CD14-positive monocyte (primary cell): ENCODE measurements at regions of chr12 and their contacts with region 1.

Region 1: DNA sequence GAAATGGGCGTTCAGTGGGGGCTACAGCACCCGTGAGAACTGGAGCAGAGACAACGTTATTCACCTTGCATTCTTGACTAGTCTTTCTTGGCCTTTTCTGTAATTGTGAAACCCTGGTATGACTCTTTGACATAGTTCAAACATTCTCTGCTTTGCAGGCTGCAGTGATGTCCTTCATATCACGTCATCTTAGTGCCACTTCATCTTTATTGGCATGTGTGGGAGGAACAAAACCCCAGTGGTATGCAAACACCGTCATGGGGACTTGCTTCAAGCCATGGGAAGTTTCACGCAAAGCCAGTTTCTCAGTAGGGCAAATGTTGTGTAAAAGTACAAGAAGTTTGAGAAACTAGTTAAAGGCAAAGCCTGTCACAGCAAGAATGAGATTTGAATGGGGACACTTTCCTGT is 20.2 kb upstream of the DUSP16 start:
- DNase-seq: no peak
- H3K4me3 ChIP-seq: no peak overlapping the region
- H3K4me3 Mint-ChIP-seq: no peak overlapping the region
- H3K27ac ChIP-seq: no peak overlapping the region
- H3K27ac Mint-ChIP-seq: no peak overlapping the region
- H3K4me1 ChIP-seq: no peaks in the 10 kb centered on the region
- H3K4me1 Mint-ChIP-seq: peaks cover 12% of the 10 kb centered on the region
- H3K27me3 ChIP-seq: no peaks in the 10 kb centered on the region
- H3K27me3 Mint-ChIP-seq: peaks cover 2 to 5% (median 2%) of the 10 kb centered on the region in 3 donors
- CTCF ChIP-seq: no peak

Region 2: GRCh38 chr12:11719678-11720099 is 863.2 kb before region 1 on chr12:
- intact Hi-C with region 1: no loop called
- DNase-seq: peak; percentile 92 to 97 (median 96)
- H3K4me3 ChIP-seq: peak overlapping the region in 1 of 3 experiments; percentile 16
- H3K4me3 Mint-ChIP-seq: peak overlapping the region; percentile 42 to 69
- H3K27ac ChIP-seq: peak overlapping the region; percentile 52 to 89
- H3K27ac Mint-ChIP-seq: peak overlapping the region; percentile 86 to 95 (median 92)
- H3K4me1 ChIP-seq: peaks cover 41 to 44% of the 10 kb centered on the region in 2 donors
- H3K4me1 Mint-ChIP-seq: peaks cover 75% of the 10 kb centered on the region
- H3K27me3 ChIP-seq: no peaks in the 10 kb centered on the region
- H3K27me3 Mint-ChIP-seq: peaks cover 0 to under 1% (median 0%) of the 10 kb centered on the region in 3 donors
- CTCF ChIP-seq: no peak

Region 3: GRCh38 chr12:12636641-12637040 is 53.7 kb after region 1 on chr12:
- intact Hi-C with region 1: loop called in 1 of 2 experiments (anchors 10 kb)
- DNase-seq: no peak
- H3K4me3 ChIP-seq: no peak overlapping the region
- H3K4me3 Mint-ChIP-seq: no peak overlapping the region
- H3K27ac ChIP-seq: peak overlapping the region in 1 of 2 donors; percentile 40
- H3K27ac Mint-ChIP-seq: peak overlapping the region in 6 of 7 donors; percentile 12 to 86 (median 44)
- H3K4me1 ChIP-seq: no peaks in the 10 kb centered on the region
- H3K4me1 Mint-ChIP-seq: peaks cover 6% of the 10 kb centered on the region
- H3K27me3 ChIP-seq: no peaks in the 10 kb centered on the region
- H3K27me3 Mint-ChIP-seq: no peaks in the 10 kb centered on the region
- CTCF ChIP-seq: no peak